CD8-positive, alpha-beta T cell (primary cell): ENCODE measurements at regions of chr9 and their contacts with region 1.

Region 1: DNA sequence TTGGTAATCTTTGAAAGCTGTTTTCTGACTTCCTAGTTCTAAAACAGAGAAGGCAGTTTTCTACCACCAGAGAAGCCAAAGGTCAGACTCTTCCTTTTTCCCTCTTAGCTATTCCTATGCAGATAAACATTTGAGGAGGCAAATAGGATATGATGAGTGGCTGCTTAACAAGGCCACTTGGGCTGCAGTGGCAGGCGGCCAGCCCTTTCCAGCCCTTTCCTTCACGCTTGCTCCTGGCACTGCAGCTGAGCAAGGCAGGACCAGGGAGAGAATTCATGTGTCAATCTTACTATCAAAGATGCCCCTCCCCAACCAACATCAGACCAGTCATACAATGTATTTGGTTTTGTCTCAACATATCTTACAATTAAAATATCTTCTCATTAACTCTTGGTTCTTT is 36.8 kb upstream of the RNF38 start:
- DNase-seq: no peak
- ATAC-seq: no peak
- H3K4me3 ChIP-seq: no peak overlapping the region
- H3K4me3 Mint-ChIP-seq: no peak overlapping the region
- H3K27ac ChIP-seq: no peak overlapping the region
- H3K27ac Mint-ChIP-seq: no peak overlapping the region
- H3K4me1 ChIP-seq: peaks cover 16% of the 10 kb centered on the region
- H3K4me1 Mint-ChIP-seq: peaks cover 41% of the 10 kb centered on the region
- H3K27me3 ChIP-seq: no peaks in the 10 kb centered on the region
- H3K27me3 Mint-ChIP-seq: no peaks in the 10 kb centered on the region
- CTCF ChIP-seq: no peak

Region 2: DNA sequence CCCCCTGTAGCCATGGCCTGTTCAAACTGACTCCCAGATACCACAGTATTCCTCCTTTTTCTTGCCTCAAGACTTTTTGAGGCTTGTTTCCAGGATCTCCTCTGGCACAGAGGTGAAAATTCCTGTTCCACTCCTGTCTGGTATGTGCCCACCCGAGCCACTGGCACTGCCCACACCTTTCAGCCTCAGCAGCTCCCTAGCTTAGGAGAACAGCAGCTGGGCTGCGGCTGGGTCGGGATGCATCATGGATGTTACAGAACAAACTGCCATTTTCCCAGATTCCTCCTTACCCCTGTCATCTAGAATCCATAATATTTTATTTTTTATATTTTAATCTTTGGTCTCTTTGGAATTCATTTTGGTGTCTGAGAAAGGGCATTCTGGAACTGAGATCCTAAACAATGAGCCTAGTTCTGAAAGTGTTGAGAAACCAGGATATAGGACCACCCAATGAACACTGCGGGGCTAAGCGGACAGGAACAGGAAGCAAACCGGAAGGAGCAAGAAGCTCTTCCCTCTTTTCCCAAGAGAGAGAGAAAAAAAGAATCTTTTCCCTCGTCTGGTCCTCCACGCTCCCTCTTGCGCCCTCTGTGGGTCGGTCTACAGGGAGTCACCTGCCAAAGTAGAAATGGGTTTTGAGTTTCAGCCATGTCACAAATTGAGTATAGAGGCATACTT is 491.4 kb before region 1 on chr9:
- CTCF ChIA-PET with region 1: no interaction called
- POLR2A ChIA-PET with region 1: no interaction called
- intact Hi-C with region 1: no loop called
- DNase-seq: peak; percentile 27 to 72 (median 62)
- ATAC-seq: peak; percentile 70
- H3K4me3 ChIP-seq: no peak overlapping the region
- H3K4me3 Mint-ChIP-seq: no peak overlapping the region
- H3K27ac ChIP-seq: no peak overlapping the region
- H3K27ac Mint-ChIP-seq: no peak overlapping the region
- H3K4me1 ChIP-seq: peaks cover 30% of the 10 kb centered on the region
- H3K4me1 Mint-ChIP-seq: peaks cover 48% of the 10 kb centered on the region
- H3K27me3 ChIP-seq: no peaks in the 10 kb centered on the region
- H3K27me3 Mint-ChIP-seq: no peaks in the 10 kb centered on the region
- CTCF ChIP-seq: peak; percentile 80

Region 3: DNA sequence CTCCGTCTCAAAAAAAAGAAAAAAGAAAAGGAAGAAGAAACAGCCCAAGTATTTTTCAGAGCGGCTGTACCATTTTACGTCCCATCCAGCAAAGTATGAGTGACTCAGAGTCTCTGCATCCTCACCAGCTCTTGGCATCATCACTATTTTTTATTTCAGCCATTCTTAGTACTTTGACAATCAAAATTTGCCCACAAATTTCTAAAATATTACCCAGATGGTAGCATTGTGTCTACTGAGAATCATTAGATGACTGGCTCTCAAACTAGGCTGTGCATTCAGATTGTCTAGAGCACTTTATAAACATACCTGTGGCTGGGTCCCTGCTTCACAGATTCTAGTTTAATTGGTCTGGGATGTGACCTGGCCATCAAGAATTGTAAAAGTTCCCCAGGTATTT is 114.2 kb after region 1 on chr9:
- CTCF ChIA-PET with region 1: interaction called, 83 read pairs
- POLR2A ChIA-PET with region 1: interaction called, 3 read pairs
- intact Hi-C with region 1: no loop called
- DNase-seq: no peak
- ATAC-seq: no peak
- H3K4me3 ChIP-seq: no peak overlapping the region
- H3K4me3 Mint-ChIP-seq: no peak overlapping the region
- H3K27ac ChIP-seq: no peak overlapping the region
- H3K27ac Mint-ChIP-seq: no peak overlapping the region
- H3K4me1 ChIP-seq: no peaks in the 10 kb centered on the region
- H3K4me1 Mint-ChIP-seq: peaks cover 3% of the 10 kb centered on the region
- H3K27me3 ChIP-seq: no peaks in the 10 kb centered on the region
- H3K27me3 Mint-ChIP-seq: no peaks in the 10 kb centered on the region
- CTCF ChIP-seq: no peak

Region 4: GRCh38 chr9:36584622-36585470 is 147.9 kb after region 1 on chr9:
- CTCF ChIA-PET with region 1: no interaction called
- POLR2A ChIA-PET with region 1: no interaction called
- intact Hi-C with region 1: no loop called
- DNase-seq: no peak
- ATAC-seq: no peak
- H3K4me3 ChIP-seq: no peak overlapping the region
- H3K4me3 Mint-ChIP-seq: no peak overlapping the region
- H3K27ac ChIP-seq: no peak overlapping the region
- H3K27ac Mint-ChIP-seq: no peak overlapping the region
- H3K4me1 ChIP-seq: no peaks in the 10 kb centered on the region
- H3K4me1 Mint-ChIP-seq: no peaks in the 10 kb centered on the region
- H3K27me3 ChIP-seq: no peaks in the 10 kb centered on the region
- H3K27me3 Mint-ChIP-seq: no peaks in the 10 kb centered on the region
- CTCF ChIP-seq: no peak